Breast epithelium (tissue), 4 donors: ENCODE measurements at regions of chr6 and their contacts with region 1.

Region 1: GRCh38 chr6:105748737-105749161 is 337.4 kb upstream of the PRDM1 start:
- DNase-seq: no peak
- H3K4me3 ChIP-seq: no peak overlapping the region
- H3K27ac ChIP-seq: no peak overlapping the region
- H3K4me1 ChIP-seq: no peaks in the 10 kb centered on the region
- H3K27me3 ChIP-seq: no peaks in the 10 kb centered on the region
- CTCF ChIP-seq: no peak
- POLR2A ChIP-seq: no peak

Region 2: DNA sequence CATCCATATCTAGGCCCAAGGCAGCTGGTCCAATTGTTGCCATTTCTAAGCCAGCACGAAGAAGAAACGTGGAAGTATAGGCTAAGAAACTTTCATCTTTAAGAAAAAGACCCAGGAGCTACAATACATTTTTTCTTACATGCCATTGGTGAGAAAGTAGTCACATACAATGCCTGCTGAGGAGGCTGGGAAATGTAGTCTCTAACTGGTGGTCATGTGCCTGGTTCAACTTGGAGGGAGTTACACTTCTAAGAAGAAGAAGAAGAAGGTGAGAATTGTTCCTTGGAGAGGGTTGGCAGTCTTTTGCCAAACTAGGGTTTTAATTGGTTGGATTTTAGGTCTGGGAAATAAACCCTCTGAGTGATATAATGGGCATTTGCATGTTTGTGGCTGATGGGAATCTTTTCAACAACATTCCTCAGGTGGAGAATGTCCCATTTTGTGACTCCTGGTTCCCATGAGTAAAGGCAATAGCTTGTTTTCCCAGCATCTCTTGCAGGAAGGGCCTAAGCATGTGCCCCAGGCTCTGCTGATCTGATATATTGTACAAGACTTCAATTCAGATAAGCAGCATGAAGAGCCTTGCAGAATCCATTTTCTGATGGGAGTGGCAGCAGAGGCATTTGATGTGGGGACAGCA is 298.9 kb before region 1 on chr6:
- intact Hi-C with region 1: loop called (anchors 10 kb)
- DNase-seq: no peak
- H3K4me3 ChIP-seq: no peak overlapping the region
- H3K27ac ChIP-seq: no peak overlapping the region
- H3K4me1 ChIP-seq: no peaks in the 10 kb centered on the region
- H3K27me3 ChIP-seq: no peaks in the 10 kb centered on the region
- CTCF ChIP-seq: no peak
- POLR2A ChIP-seq: no peak